ENCODE measurements at regions of chr14 and their contacts with region 1.

Region 1: DNA sequence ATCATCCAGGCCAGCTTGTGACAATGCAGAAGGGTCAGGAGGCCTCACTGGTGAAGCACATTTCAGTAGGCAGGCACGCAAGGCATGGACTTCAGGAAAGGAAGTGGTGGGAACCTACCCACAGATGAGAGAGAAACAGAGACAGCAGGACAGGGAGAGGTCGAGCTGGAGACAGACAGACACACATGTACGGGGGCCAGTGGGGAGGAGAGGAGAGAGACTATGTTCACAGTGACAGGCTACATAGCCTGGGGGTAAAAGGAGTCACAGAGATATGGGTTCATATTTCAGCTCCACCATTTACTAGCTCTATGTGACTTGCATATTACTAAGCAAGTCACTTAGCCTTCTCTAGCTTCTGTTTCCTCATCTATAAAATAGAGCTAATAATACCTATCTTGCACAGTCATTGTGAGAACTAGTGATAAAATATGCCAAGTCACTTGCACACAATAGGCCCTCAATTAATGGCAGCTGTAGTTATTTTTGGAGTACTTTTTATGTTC is 91.1 kb upstream of the FUT8 start:
- DNase-seq: no peak
- ATAC-seq: no peak
- H3K4me3 Mint-ChIP-seq: peak overlapping the region; percentile 21
- H3K27ac Mint-ChIP-seq: peak overlapping the region; percentile 62
- H3K4me1 Mint-ChIP-seq: peaks cover 77% of the 10 kb centered on the region
- H3K27me3 Mint-ChIP-seq: no peaks in the 10 kb centered on the region
- CTCF ChIP-seq: no peak

Region 2: GRCh38 chr14:65195042-65195719 is 126.2 kb before region 1 on chr14:
- CTCF ChIA-PET with region 1: no interaction called
- POLR2A ChIA-PET with region 1: interaction called, 11 read pairs
- intact Hi-C with region 1: no loop called
- DNase-seq: no peak
- ATAC-seq: peak; percentile 71
- H3K4me3 Mint-ChIP-seq: peak overlapping the region; percentile 75
- H3K27ac Mint-ChIP-seq: peak overlapping the region; percentile 87
- H3K4me1 Mint-ChIP-seq: peaks cover 49% of the 10 kb centered on the region
- H3K27me3 Mint-ChIP-seq: no peaks in the 10 kb centered on the region
- CTCF ChIP-seq: no peak

Region 3: GRCh38 chr14:65281991-65282895 is 39.2 kb before region 1 on chr14:
- CTCF ChIA-PET with region 1: interaction called, 11 read pairs
- POLR2A ChIA-PET with region 1: interaction called, 48 read pairs
- intact Hi-C with region 1: loop called (anchors 2 kb)
- DNase-seq: no peak
- ATAC-seq: peak; percentile 13
- H3K4me3 Mint-ChIP-seq: peak overlapping the region; percentile 79
- H3K27ac Mint-ChIP-seq: peak overlapping the region; percentile 93
- H3K4me1 Mint-ChIP-seq: peaks cover 57% of the 10 kb centered on the region
- H3K27me3 Mint-ChIP-seq: no peaks in the 10 kb centered on the region
- CTCF ChIP-seq: no peak

Region 4: DNA sequence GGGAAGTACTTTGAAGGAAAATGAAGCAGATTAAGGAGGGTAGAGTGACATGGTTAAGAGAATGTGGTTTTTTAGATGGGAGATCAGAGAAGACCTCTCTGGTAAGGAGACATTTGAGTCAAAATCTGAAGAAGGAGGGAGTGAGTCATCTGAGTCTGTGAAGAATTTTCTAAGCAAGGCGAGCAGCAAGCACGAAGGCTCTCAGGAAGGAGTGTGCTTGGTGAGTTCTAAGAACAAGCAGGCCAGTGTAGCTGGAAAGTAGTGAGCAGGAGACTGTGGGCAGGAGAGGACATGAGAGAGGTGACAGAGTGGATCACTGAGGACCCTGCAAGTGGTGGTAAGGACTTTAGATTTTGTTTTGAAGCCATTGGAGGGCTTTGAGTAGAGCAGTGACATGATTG is 14.8 kb after region 1 on chr14:
- CTCF ChIA-PET with region 1: interaction called, 8 read pairs
- POLR2A ChIA-PET with region 1: interaction called, 31 read pairs
- intact Hi-C with region 1: no loop called
- DNase-seq: no peak
- ATAC-seq: peak; percentile 70
- H3K4me3 Mint-ChIP-seq: peak overlapping the region; percentile 52
- H3K27ac Mint-ChIP-seq: peak overlapping the region; percentile 63
- H3K4me1 Mint-ChIP-seq: peaks cover 59% of the 10 kb centered on the region
- H3K27me3 Mint-ChIP-seq: no peaks in the 10 kb centered on the region
- CTCF ChIP-seq: no peak

Region 5: GRCh38 chr14:65356327-65356852 is 35.0 kb after region 1 on chr14:
- CTCF ChIA-PET with region 1: interaction called, 5 read pairs
- POLR2A ChIA-PET with region 1: interaction called, 11 read pairs
- intact Hi-C with region 1: loop called (anchors 1 kb)
- DNase-seq: no peak
- ATAC-seq: no peak
- H3K4me3 Mint-ChIP-seq: no peak overlapping the region
- H3K27ac Mint-ChIP-seq: peak overlapping the region; percentile 71
- H3K4me1 Mint-ChIP-seq: peaks cover 87% of the 10 kb centered on the region
- H3K27me3 Mint-ChIP-seq: no peaks in the 10 kb centered on the region
- CTCF ChIP-seq: no peak

Measured in activated B cell treated with CpG ODN at 0.5 μM for 24 hours (primary cell).